A549 (cell line): ENCODE measurements at regions of chr12 and their contacts with region 1.

Region 1: DNA sequence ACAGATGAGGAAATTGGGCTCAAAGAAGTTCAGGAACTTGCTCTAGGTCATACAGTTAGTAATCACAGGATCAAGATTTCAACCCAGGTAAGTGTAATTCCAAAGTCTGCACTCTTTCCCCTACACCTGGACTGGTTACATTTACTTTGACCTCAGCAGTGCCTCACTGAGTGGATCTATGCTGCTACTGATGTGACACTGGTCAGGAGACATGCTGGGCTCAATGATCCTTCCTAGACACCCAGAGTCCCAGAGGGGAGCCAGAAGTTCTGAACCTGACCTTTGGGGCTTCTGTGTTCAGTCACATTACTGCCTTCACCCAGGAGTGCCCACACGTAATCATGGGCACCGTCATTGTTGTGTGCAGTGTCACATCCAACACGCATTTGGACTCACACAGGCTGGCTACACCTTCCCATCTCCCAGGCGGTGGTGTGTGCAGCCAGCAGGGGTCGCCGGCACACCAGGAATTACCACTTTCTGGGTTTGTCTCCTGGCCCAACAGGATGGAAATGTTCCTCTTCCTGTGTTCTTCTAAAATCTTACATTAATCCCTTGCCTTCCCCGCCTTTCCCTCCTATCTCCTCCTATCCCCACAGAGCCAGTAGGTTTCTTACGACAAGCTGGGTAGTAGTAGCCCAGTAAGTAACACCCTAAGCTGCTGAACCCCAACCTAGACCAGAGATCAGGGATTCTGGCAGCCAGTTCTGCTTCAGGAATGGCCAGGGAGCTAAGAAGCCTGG is 25.6 kb downstream of the CALCOCO1 start:
- DNase-seq: peak; percentile 76 to 84
- ATAC-seq: peak; percentile 94 to 98
- H3K4me3 ChIP-seq: no peak overlapping the region
- H3K27ac ChIP-seq: no peak overlapping the region
- H3K4me1 ChIP-seq: no peaks in the 10 kb centered on the region
- CTCF ChIP-seq: peak; percentile 96
- EP300 ChIP-seq: no peak
- POLR2A ChIP-seq: no peak
- RAD21 ChIP-seq: peak; percentile 95 to 98

Region 2: GRCh38 chr12:53684654-53685220 is 17.0 kb before region 1 on chr12:
- CTCF ChIA-PET with region 1: interaction called, 46 read pairs
- POLR2A ChIA-PET with region 1: no interaction called
- DNase-seq: no peak
- ATAC-seq: no peak
- H3K4me3 ChIP-seq: no peak overlapping the region
- H3K27ac ChIP-seq: no peak overlapping the region
- H3K4me1 ChIP-seq: no peaks in the 10 kb centered on the region
- CTCF ChIP-seq: no peak
- EP300 ChIP-seq: no peak
- POLR2A ChIP-seq: no peak
- RAD21 ChIP-seq: no peak

Region 3: GRCh38 chr12:53719649-53720048 is 18.0 kb after region 1 on chr12:
- CTCF ChIA-PET with region 1: interaction called, 833 read pairs
- POLR2A ChIA-PET with region 1: no interaction called
- DNase-seq: peak in 1 of 2 experiments; percentile 36
- ATAC-seq: peak in 1 of 2 experiments; percentile 71; a peak in 3 of 6 replicates
- H3K4me3 ChIP-seq: no peak overlapping the region
- H3K27ac ChIP-seq: no peak overlapping the region
- H3K4me1 ChIP-seq: no peaks in the 10 kb centered on the region
- CTCF ChIP-seq: no peak
- EP300 ChIP-seq: no peak
- POLR2A ChIP-seq: no peak
- RAD21 ChIP-seq: no peak

Region 4: GRCh38 chr12:53727310-53728041 is 25.8 kb after region 1 on chr12 and contains the start of gene CALCOCO1:
- CTCF ChIA-PET with region 1: interaction called, 833 read pairs
- POLR2A ChIA-PET with region 1: no interaction called
- DNase-seq: peak; percentile 98 to 99
- ATAC-seq: peak; percentile 99 to 100
- H3K4me3 ChIP-seq: peak within 1 kb of the TSS; percentile 64
- H3K27ac ChIP-seq: peak within 1 kb of the TSS; percentile 72 to 76
- H3K4me1 ChIP-seq: peaks cover 12% of the 10 kb centered on the region
- CTCF ChIP-seq: no peak
- EP300 ChIP-seq: no peak
- POLR2A ChIP-seq: peak; percentile 64
- RAD21 ChIP-seq: no peak
- polyA plus RNA-seq, gene CALCOCO1: 41.5 and 54.5 TPM in 2 replicates

Region 5: GRCh38 chr12:53757095-53757770 is 55.5 kb after region 1 on chr12:
- CTCF ChIA-PET with region 1: interaction called, 31 read pairs
- POLR2A ChIA-PET with region 1: no interaction called
- DNase-seq: peak; percentile 78 to 86
- ATAC-seq: peak; percentile 59 to 84; a peak in 5 of 6 replicates
- H3K4me3 ChIP-seq: peak overlapping the region; percentile 30; the same call in 2 of the 3 replicates
- H3K27ac ChIP-seq: peak overlapping the region; percentile 53 to 73; a peak in 5 of 6 replicates
- H3K4me1 ChIP-seq: peaks cover 11% of the 10 kb centered on the region; the same call in 1 of the 3 replicates
- CTCF ChIP-seq: peak; percentile 65
- EP300 ChIP-seq: no peak
- POLR2A ChIP-seq: no peak
- RAD21 ChIP-seq: peak; percentile 24 to 60; a peak in 3 of 5 replicates